ENCODE measurements at regions of chr1 and their contacts with region 1.

Region 1: GRCh38 chr1:234373064-234373958 is at the start of gene COA6:
- DNase-seq: peak; percentile 96
- H3K4me3 Mint-ChIP-seq: peak within 1 kb of the TSS; percentile 95
- H3K27ac Mint-ChIP-seq: peak within 1 kb of the TSS; percentile 100
- H3K4me1 Mint-ChIP-seq: peaks cover 47% of the 10 kb centered on the region
- H3K27me3 Mint-ChIP-seq: peaks cover 2% of the 10 kb centered on the region
- total RNA-seq, gene COA6: 67.7 and 68.3 TPM in 2 replicates

Region 2: GRCh38 chr1:233721141-233721547 is 652.2 kb before region 1 on chr1:
- intact Hi-C with region 1: no loop called
- DNase-seq: peak; percentile 20
- H3K4me3 Mint-ChIP-seq: no peak overlapping the region
- H3K27ac Mint-ChIP-seq: no peak overlapping the region
- H3K4me1 Mint-ChIP-seq: no peaks in the 10 kb centered on the region
- H3K27me3 Mint-ChIP-seq: peaks cover 2% of the 10 kb centered on the region

Region 3: GRCh38 chr1:234357831-234358230 is 15.5 kb before region 1 on chr1:
- intact Hi-C with region 1: loop called (anchors 1 kb)
- DNase-seq: no peak
- H3K4me3 Mint-ChIP-seq: peak overlapping the region; percentile 90
- H3K27ac Mint-ChIP-seq: peak overlapping the region; percentile 64
- H3K4me1 Mint-ChIP-seq: peaks cover 19% of the 10 kb centered on the region
- H3K27me3 Mint-ChIP-seq: peaks cover 16% of the 10 kb centered on the region

Region 4: GRCh38 chr1:234386122-234386521 is 12.8 kb after region 1 on chr1:
- intact Hi-C with region 1: no loop called
- DNase-seq: no peak
- H3K4me3 Mint-ChIP-seq: no peak overlapping the region
- H3K27ac Mint-ChIP-seq: peak overlapping the region; percentile 25
- H3K4me1 Mint-ChIP-seq: peaks cover 14% of the 10 kb centered on the region
- H3K27me3 Mint-ChIP-seq: no peaks in the 10 kb centered on the region

Region 5: DNA sequence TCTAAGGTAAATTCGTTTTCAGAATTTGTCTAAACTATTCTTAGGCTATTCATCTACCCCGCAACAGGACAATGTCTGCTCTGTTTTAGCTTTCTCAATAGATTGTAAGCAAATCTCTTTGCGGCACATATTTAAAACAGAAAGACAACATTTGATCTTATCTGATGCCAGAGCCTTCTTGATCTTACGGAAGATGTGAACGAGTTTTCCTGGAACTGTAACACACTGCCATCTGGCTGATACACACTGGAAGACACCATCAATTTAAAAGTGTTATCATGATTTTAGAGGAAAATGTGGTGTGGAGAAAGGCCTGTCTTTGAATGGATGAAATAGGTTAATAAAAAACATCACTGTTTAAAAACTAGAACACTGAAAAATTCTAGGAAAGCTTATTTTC is 36.0 kb after region 1 on chr1:
- intact Hi-C with region 1: loop called (anchors 1 kb)
- DNase-seq: peak; percentile 81
- H3K4me3 Mint-ChIP-seq: peak overlapping the region; percentile 67
- H3K27ac Mint-ChIP-seq: peak overlapping the region; percentile 84
- H3K4me1 Mint-ChIP-seq: peaks cover 30% of the 10 kb centered on the region
- H3K27me3 Mint-ChIP-seq: no peaks in the 10 kb centered on the region

Region 6: DNA sequence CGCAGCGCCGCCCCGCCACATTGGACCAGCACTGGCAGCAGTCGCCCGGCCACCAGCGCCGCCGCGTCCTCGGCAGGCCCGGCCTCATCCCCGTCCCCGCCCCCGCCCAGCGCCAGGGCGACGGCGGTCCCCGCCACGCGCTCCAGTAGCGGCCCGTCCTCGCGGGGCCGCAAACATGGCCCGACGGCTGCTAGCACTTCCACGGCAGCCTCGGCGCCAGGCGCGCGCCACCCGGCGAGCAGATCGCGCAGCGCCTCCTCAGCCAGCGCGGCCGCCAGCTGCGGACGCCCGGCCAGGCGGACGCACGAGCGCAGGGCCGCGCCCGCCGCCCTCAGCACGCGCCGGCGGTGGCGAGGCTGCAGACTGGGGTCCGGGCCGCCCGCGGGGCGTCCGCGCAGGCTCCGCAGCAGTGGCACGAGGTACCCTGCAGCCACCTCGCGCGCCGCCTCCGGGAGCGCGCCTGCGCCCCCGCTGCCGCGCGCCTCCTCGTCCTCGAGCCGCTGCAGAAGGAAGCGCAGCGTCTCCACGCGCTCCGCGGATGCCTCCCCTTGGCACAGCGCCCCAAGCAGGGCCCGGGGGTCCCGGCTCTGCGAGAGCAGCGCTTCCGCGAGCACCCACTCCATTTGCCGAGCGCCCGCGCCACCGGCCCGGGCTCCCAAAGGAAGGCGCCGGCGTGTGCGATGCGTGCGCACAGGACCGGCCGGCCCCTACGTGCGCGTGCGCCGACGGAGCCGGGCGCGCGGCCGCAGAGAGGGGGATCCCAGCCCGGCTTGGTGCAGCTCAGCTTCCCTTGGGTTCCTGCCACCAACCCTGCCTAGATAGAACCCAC is 105.4 kb after region 1 on chr1 and contains the start of gene TARBP1:
- intact Hi-C with region 1: loop called (anchors 1 kb)
- DNase-seq: peak; percentile 94
- H3K4me3 Mint-ChIP-seq: peak within 1 kb of the TSS; percentile 87
- H3K27ac Mint-ChIP-seq: peak within 1 kb of the TSS; percentile 85
- H3K4me1 Mint-ChIP-seq: peaks cover 34% of the 10 kb centered on the region
- H3K27me3 Mint-ChIP-seq: peaks cover 12% of the 10 kb centered on the region
- total RNA-seq, gene TARBP1: 70.7 and 75.9 TPM in 2 replicates